ENCODE measurements at regions of chr6 and their contacts with region 1.

Region 1: DNA sequence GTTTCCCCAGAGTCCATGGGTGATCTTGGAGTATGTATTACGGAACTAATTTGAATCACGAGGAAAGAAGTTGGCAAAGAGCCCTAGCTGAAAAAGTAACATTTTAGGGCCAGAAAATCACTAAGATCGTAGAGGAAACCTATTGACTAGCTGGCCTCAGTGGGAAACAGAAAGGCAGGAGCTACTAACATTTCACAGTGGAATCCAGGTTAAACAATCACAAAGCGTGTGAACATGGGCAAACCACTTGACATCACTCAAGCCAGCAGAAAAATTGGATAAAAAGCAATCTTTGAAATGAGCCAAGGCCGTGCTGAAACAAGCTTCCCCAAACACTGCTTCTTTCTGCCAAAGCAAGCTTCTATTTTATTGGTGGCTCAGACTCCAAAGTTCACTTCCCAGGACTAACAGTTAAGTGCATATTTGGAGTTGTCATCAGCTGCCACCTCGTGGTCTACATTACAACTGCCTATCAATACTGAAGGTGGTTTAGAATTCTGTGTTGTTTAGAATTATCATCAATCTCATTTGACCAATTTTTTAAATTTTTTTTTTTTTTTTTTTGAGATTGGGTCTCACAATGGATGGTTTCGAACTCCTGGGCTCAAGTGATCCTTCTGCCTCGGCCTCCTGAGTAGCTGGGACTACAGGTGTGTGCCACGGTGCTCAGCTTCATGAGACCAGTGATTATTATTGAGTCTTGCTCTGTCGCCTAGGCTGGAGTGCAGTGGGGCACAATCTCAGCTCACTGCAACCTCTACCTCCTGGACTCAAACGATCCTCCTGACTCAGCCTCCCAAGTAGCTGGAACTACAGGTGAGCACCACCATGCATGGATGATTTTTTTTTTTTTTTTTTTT is 10.6 kb downstream of the RPS10 start:
- H3K4me3 ChIP-seq: no peak overlapping the region
- H3K27ac ChIP-seq: no peak overlapping the region
- H3K4me1 ChIP-seq: no peaks in the 10 kb centered on the region
- CTCF ChIP-seq: peak; percentile 44

Region 2: DNA sequence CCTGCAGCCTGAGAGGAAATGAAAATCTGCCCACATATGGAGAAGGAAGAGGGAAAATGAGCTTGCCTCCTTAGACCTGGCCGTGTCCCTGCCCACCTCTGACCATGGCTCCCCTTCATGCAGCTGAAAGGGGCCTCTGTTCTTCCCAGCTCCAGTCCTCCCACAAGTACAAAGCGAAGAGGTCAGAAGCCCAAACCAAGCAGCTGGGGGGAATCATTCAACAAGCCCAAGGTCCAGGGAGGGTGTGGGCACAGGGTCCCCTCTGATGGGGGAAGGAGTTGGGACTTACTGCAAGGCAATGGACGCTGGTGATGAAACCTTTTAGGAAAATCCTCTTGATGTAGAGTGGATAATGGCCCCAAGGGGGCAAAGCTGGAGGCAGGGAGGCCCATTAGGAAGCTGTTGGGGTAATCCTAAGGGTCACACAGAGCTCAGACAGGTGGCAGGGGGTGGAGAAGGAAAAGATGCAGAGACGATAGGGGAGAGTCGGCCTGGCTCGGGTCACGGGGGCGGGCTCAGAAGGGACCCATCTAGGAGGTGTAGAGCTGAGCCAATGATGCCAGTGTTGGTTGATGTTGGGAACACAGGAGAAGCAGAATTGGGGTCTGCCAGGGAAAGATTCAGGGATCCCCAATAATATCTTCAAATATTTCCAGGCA is 253.2 kb before region 1 on chr6:
- CTCF ChIA-PET with region 1: interaction called, 39 read pairs
- POLR2A ChIA-PET with region 1: no interaction called
- H3K4me3 ChIP-seq: no peak overlapping the region
- H3K27ac ChIP-seq: no peak overlapping the region
- H3K4me1 ChIP-seq: no peaks in the 10 kb centered on the region
- CTCF ChIP-seq: no peak

Region 3: DNA sequence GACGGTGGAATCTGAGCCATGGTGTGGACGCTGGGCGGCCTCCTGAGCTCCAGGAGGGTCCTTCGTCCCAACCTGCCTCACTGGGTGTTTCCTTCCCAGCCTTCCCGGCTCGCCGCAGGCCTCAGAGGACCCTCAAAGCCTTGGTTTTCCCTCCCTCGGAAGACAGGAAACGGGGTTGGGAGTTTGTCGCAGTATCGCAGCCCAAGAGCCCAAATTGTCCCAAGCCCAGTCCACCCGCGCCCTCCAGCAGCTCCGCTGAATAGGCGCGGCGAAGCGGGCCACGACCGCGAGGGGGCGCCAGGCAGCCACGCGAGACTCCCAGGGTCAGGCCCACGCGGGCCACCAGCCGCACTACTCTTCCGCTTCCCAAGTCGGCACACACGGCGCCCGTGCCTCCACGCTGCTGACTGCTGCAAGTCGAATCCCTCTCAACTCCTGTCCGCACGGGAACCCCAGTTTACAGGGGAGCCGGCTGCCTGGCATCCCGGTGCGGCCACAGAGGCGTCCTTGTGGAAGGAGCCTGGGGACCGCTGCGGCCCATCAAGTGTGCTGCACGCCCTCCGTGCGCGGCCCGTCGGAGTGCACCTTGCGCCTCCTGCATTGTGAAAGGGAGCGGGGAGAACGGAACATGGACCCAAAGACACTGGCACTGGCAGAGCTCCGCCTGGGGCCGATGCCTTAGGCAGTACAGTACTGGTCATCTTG is 219.0 kb before region 1 on chr6:
- CTCF ChIA-PET with region 1: interaction called, 38 read pairs
- POLR2A ChIA-PET with region 1: interaction called, 13 read pairs
- H3K4me3 ChIP-seq: peak overlapping the region; percentile 30
- H3K27ac ChIP-seq: no peak overlapping the region
- H3K4me1 ChIP-seq: no peaks in the 10 kb centered on the region
- CTCF ChIP-seq: peak; percentile 97

Region 4: GRCh38 chr6:34332251-34333198 is 82.7 kb before region 1 on chr6:
- CTCF ChIA-PET with region 1: no interaction called
- POLR2A ChIA-PET with region 1: no interaction called
- H3K4me3 ChIP-seq: no peak overlapping the region
- H3K27ac ChIP-seq: no peak overlapping the region
- H3K4me1 ChIP-seq: peaks cover 8% of the 10 kb centered on the region
- CTCF ChIP-seq: no peak

Region 5: DNA sequence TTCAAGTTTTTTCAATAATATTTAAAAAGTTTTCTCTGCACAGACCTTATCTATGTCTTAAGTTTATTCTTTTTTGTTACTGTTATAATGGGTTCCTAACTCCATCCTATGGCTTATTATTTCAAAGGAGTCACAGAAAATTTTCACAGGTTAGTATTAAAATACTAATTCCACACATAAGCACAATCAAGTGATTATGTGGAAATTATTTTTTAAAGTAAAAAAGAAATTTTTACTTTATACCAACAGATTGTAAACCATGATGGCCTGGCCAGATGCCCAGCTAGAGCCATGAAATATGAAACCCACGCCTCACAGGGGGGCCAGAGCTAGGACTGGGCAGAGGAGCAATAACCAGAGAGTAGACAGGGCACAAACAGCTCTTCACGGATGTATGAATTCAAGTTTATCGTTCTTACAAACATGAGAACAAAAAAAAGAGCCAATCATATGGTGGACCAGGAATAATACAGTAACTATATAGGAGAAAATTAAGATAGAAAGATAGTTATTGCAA is 56.8 kb before region 1 on chr6:
- CTCF ChIA-PET with region 1: interaction called, 12 read pairs
- POLR2A ChIA-PET with region 1: no interaction called
- H3K4me3 ChIP-seq: no peak overlapping the region
- H3K27ac ChIP-seq: no peak overlapping the region
- H3K4me1 ChIP-seq: peaks cover 37% of the 10 kb centered on the region
- CTCF ChIP-seq: no peak

Region 6: DNA sequence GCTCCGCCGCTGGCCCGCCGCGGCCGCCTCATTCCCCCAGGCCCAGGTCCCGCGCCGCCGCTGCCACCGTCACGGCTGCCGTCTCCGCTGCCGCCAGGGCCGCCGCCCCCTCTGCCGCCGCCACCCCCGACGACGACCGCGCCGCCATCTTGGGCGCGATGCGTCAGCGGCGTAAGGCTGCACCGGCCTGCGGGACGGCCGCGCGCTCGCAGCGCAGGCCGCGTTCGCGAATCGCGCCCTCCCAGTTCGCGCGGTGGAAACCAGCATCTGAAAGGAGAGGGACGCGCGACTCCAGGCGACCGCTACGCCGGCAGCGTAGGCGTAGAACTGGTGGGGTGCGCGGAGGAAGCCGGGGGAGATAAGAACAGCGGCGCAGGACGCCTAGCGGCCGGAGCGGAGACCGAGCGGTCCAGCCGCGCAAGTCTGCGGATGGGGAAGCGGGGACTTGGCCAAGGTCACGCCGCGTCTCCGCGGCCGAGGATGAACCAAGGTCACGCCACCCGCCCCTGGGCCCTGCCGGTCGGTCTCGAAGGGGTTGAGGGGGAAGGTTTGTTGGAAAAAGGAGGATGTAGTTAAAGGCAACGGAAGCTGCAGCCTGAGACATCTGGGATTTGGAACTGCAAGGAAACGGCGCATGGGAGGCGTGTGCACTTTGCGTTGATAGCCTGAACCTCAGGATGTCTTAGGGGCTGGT is 22.6 kb before region 1 on chr6 and contains the start of gene NUDT3:
- CTCF ChIA-PET with region 1: interaction called, 13 read pairs
- POLR2A ChIA-PET with region 1: interaction called, 7 read pairs
- H3K4me3 ChIP-seq: peak within 1 kb of the TSS; percentile 74
- H3K27ac ChIP-seq: peak within 1 kb of the TSS; percentile 81
- H3K4me1 ChIP-seq: peaks cover 2% of the 10 kb centered on the region; the same call in 1 of the 2 replicates
- CTCF ChIP-seq: peak; percentile 98

Region 7: GRCh38 chr6:34425498-34426410 is 10.5 kb after region 1 on chr6 and contains the start of gene RPS10:
- CTCF ChIA-PET with region 1: interaction called, 9 read pairs
- POLR2A ChIA-PET with region 1: interaction called, 75 read pairs
- H3K4me3 ChIP-seq: peak within 1 kb of the TSS; percentile 58
- H3K27ac ChIP-seq: peak within 1 kb of the TSS; percentile 97
- H3K4me1 ChIP-seq: peaks cover 2% of the 10 kb centered on the region; the same call in 1 of the 2 replicates
- CTCF ChIP-seq: no peak